ENCODE measurements at regions of chr3 and their contacts with region 1.

Region 1: GRCh38 chr3:56753206-56753820 is 48.4 kb downstream of the ARHGEF3 start:
- DNase-seq: peak; percentile 47
- H3K4me3 Mint-ChIP-seq: peak overlapping the region; percentile 67
- H3K27ac Mint-ChIP-seq: peak overlapping the region; percentile 83
- H3K4me1 Mint-ChIP-seq: peaks cover 68% of the 10 kb centered on the region
- H3K27me3 Mint-ChIP-seq: no peaks in the 10 kb centered on the region

Region 2: GRCh38 chr3:56131974-56132590 is 621.2 kb before region 1 on chr3:
- intact Hi-C with region 1: loop called (anchors 5 kb)
- DNase-seq: no peak
- H3K4me3 Mint-ChIP-seq: no peak overlapping the region
- H3K27ac Mint-ChIP-seq: no peak overlapping the region
- H3K4me1 Mint-ChIP-seq: peaks cover 6% of the 10 kb centered on the region
- H3K27me3 Mint-ChIP-seq: peaks cover 7% of the 10 kb centered on the region

Region 3: DNA sequence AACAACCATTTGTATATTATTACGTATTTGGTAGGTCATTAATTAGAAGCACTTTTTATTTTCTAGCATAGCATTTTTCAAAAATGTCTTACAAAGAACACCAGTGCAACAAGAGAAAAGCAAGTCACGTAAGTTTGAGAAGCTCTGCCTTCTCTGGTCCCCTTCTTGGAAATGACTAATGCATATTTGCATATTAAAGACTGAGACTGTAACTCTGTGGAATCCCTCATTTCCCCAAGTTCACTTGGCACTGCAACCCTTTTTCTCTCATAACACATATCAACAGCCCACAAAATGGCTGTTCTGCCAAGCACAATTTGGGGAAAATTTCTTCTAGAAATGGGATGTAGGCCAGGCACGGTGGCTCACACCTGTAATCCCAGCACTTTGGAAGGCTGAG is 461.4 kb before region 1 on chr3:
- intact Hi-C with region 1: no loop called
- DNase-seq: no peak
- H3K4me3 Mint-ChIP-seq: no peak overlapping the region
- H3K27ac Mint-ChIP-seq: peak overlapping the region; percentile 59
- H3K4me1 Mint-ChIP-seq: peaks cover 31% of the 10 kb centered on the region
- H3K27me3 Mint-ChIP-seq: peaks cover 3% of the 10 kb centered on the region

Region 4: GRCh38 chr3:56682462-56683121 is 70.7 kb before region 1 on chr3:
- intact Hi-C with region 1: loop called (anchors 2 kb)
- DNase-seq: peak; percentile 77
- H3K4me3 Mint-ChIP-seq: peak overlapping the region; percentile 97
- H3K27ac Mint-ChIP-seq: peak overlapping the region; percentile 96
- H3K4me1 Mint-ChIP-seq: peaks cover 45% of the 10 kb centered on the region
- H3K27me3 Mint-ChIP-seq: peaks cover 2% of the 10 kb centered on the region

Region 5: GRCh38 chr3:56725175-56725574 is 28.1 kb before region 1 on chr3:
- intact Hi-C with region 1: loop called (anchors 1 kb)
- DNase-seq: peak; percentile 68
- H3K4me3 Mint-ChIP-seq: peak overlapping the region; percentile 81
- H3K27ac Mint-ChIP-seq: peak overlapping the region; percentile 93
- H3K4me1 Mint-ChIP-seq: peaks cover 69% of the 10 kb centered on the region
- H3K27me3 Mint-ChIP-seq: no peaks in the 10 kb centered on the region

Region 6: GRCh38 chr3:56737006-56737405 is 16.3 kb before region 1 on chr3:
- intact Hi-C with region 1: loop called (anchors 2 kb)
- DNase-seq: no peak
- H3K4me3 Mint-ChIP-seq: no peak overlapping the region
- H3K27ac Mint-ChIP-seq: no peak overlapping the region
- H3K4me1 Mint-ChIP-seq: peaks cover 34% of the 10 kb centered on the region
- H3K27me3 Mint-ChIP-seq: no peaks in the 10 kb centered on the region

Region 7: GRCh38 chr3:56783644-56784447 is 30.5 kb after region 1 on chr3:
- intact Hi-C with region 1: loop called (anchors 1 kb)
- DNase-seq: peak; percentile 72
- H3K4me3 Mint-ChIP-seq: peak overlapping the region; percentile 81
- H3K27ac Mint-ChIP-seq: peak overlapping the region; percentile 95
- H3K4me1 Mint-ChIP-seq: peaks cover 97% of the 10 kb centered on the region
- H3K27me3 Mint-ChIP-seq: no peaks in the 10 kb centered on the region

Region 8: GRCh38 chr3:56988458-56989168 is 235.3 kb after region 1 on chr3:
- intact Hi-C with region 1: loop called (anchors 2 kb)
- DNase-seq: peak; percentile 46
- H3K4me3 Mint-ChIP-seq: no peak overlapping the region
- H3K27ac Mint-ChIP-seq: no peak overlapping the region
- H3K4me1 Mint-ChIP-seq: peaks cover 27% of the 10 kb centered on the region
- H3K27me3 Mint-ChIP-seq: peaks cover 14% of the 10 kb centered on the region

Measured in activated T-helper 1 cell treated with anti-CD3 and anti-CD28 coated beads, Interleukin-12 subunit alpha, Interleukin-12 subunit beta, Interleukin-2, Interleukin-4 antibody, amounts not matched to agents 30 ng/mL and 10 ng/mL and 1 ng/mL, durations not matched to agents 14 hours and 24 hours and 36 hours (primary cell).